Pancreas (tissue), 10 donors: ENCODE measurements at regions of chr7 and their contacts with region 1.

Region 1: GRCh38 chr7:33757562-33758165 is 147.7 kb upstream of the BMPER start:
- DNase-seq: no peak
- ATAC-seq: peak in 1 of 4 donors; percentile 36
- H3K4me3 ChIP-seq: no peak overlapping the region
- H3K27ac ChIP-seq: no peak overlapping the region
- H3K4me1 ChIP-seq: no peaks in the 10 kb centered on the region
- H3K27me3 ChIP-seq: no peaks in the 10 kb centered on the region
- CTCF ChIP-seq: peak; percentile 35 to 58 (median 54)

Region 2: DNA sequence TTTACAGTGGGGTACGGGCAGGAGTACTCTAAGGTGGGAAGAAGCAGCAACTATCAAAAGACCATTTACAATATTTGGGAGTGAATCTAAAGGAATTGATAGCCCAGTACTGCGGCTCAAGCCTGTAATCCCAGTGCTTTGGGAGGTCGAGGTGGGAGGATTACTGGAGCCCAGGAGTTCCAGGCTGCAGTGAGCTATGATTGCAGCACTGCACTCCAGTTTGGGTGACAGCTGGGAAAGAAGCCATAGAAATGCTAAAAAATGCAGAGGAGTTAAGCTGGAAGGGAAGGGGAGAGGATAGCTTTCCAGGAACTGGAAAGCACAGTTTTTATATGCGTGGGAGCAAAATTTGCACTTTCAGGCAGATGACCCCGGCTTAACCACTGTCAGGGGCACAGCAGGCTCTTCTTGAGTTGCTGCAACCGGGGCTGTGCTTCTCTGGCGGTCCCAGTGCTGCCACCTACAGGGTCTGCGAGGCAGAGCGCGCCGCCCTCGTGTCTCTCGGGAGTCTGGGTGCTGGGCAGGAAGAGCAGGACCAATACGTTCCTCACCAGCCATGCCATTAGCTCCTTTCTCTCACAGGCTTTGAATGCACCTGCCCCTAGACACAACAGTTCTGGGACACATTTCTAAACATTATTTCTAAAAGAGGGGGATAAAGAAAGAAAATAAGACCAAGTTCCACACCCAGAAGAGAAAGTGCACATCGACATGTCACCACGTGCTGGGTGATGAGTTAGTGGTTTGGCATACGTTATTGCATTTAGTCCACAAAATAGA is 137.6 kb after region 1 on chr7:
- intact Hi-C with region 1: loop called in 1 of 3 experiments (anchors 10 kb)
- DNase-seq: peak; percentile 65 to 95 (median 82)
- ATAC-seq: peak; percentile 85 to 100 (median 99)
- H3K4me3 ChIP-seq: no peak overlapping the region
- H3K27ac ChIP-seq: no peak overlapping the region
- H3K4me1 ChIP-seq: no peaks in the 10 kb centered on the region
- H3K27me3 ChIP-seq: peaks cover 0 to 4% (median 0%) of the 10 kb centered on the region in 4 donors
- CTCF ChIP-seq: peak; percentile 81 to 93 (median 88)

Region 3: DNA sequence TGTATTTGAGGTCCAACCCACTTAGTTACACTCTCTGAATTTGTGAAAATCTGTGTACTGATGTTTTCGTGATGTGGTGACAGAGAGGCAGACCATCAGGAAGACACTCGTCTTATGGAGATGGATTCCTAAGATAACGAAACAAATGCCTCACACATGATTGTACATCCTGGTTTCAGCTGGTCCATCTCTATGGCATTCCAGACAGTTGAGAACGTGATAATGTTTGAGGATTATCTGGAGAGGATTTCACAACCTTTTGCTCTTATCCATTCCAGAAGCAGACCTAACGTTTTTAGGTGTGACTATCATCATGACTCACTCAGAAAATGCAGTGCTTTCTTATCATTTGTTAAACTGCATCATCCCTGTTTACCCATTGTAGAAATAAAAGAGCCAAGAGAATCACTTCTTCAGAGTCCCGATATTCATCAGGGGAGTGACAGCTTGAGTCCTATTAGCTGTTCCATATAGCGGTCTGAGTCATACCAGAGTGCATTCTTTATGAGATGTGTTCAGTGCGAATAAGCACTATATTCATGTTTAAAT is 222.2 kb after region 1 on chr7:
- intact Hi-C with region 1: no loop called
- DNase-seq: no peak
- ATAC-seq: no peak
- H3K4me3 ChIP-seq: no peak overlapping the region
- H3K27ac ChIP-seq: no peak overlapping the region
- H3K4me1 ChIP-seq: no peaks in the 10 kb centered on the region
- H3K27me3 ChIP-seq: no peaks in the 10 kb centered on the region
- CTCF ChIP-seq: no peak